Activated B cell treated with CpG ODN at 0.5 μM for 24 hours (primary cell): ENCODE measurements at regions of chr17 and their contacts with region 1.

Region 1: DNA sequence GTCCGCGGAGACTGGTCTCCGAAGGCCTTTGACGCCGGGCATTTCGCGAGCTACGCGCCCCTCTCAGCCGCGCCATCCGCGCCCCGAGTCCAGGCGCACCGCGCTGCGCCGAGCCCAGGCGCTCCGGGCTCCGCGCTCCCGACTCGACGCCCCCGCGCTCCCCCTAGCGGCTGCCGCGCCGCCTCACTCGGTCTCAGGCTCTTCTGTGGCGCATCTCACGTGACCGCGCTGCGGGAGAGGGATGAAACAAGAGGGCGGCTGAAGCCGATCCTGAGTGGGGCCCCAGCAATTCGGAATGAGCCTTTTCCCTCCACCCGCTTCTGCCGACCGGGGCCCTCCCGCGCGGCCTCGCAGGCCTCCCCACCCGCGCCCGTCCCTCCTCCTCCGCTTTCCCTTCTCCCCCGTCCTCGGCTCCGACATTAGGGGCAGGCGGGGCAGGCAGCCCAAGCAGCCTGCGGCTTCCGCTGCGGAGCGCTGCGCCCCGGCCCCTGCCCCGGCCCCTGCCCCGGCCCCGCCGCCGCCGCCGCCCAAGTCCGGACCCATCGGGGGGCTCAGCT is 42.5 kb upstream of the AMZ2 start:
- DNase-seq: peak; percentile 95
- ATAC-seq: peak; percentile 79
- H3K4me3 Mint-ChIP-seq: peak overlapping the region; percentile 89
- H3K27ac Mint-ChIP-seq: peak overlapping the region; percentile 94
- H3K4me1 Mint-ChIP-seq: peaks cover 41% of the 10 kb centered on the region
- H3K27me3 Mint-ChIP-seq: peaks cover 2% of the 10 kb centered on the region
- CTCF ChIP-seq: peak; percentile 28

Region 2: GRCh38 chr17:67818110-67819002 is 387.0 kb before region 1 on chr17:
- CTCF ChIA-PET with region 1: no interaction called
- POLR2A ChIA-PET with region 1: interaction called, 6 read pairs
- intact Hi-C with region 1: loop called (anchors 10 kb)
- DNase-seq: no peak
- ATAC-seq: peak; percentile 63
- H3K4me3 Mint-ChIP-seq: peak overlapping the region; percentile 76
- H3K27ac Mint-ChIP-seq: peak overlapping the region; percentile 90
- H3K4me1 Mint-ChIP-seq: peaks cover 81% of the 10 kb centered on the region
- H3K27me3 Mint-ChIP-seq: no peaks in the 10 kb centered on the region
- CTCF ChIP-seq: no peak

Region 3: DNA sequence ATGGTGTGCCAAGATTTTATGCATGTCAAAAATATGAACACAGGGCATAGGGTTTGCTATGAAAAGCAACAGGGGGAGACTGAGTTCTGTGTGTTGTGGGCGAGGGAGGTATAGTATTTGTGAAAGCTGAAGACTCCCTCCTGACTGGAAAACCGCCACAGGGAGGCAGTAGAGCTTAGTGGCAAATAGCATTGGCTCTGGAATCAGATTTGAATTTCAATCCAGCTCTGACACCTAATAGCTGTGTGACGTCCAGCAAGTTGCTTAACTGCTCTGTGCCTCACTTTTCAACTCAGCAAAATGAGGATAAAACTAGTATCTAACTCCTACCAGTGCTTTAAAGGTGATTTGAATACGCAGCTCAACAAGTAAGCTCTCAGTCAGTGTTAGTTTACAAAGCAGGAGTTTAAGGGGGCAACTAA is 147.8 kb before region 1 on chr17:
- CTCF ChIA-PET with region 1: no interaction called
- POLR2A ChIA-PET with region 1: interaction called, 3 read pairs
- intact Hi-C with region 1: loop called (anchors 1 kb)
- DNase-seq: no peak
- ATAC-seq: peak; percentile 71
- H3K4me3 Mint-ChIP-seq: no peak overlapping the region
- H3K27ac Mint-ChIP-seq: no peak overlapping the region
- H3K4me1 Mint-ChIP-seq: no peaks in the 10 kb centered on the region
- H3K27me3 Mint-ChIP-seq: no peaks in the 10 kb centered on the region
- CTCF ChIP-seq: no peak

Region 4: GRCh38 chr17:68133346-68134045 is 71.8 kb before region 1 on chr17:
- CTCF ChIA-PET with region 1: no interaction called
- POLR2A ChIA-PET with region 1: no interaction called
- intact Hi-C with region 1: no loop called
- DNase-seq: no peak
- ATAC-seq: no peak
- H3K4me3 Mint-ChIP-seq: no peak overlapping the region
- H3K27ac Mint-ChIP-seq: no peak overlapping the region
- H3K4me1 Mint-ChIP-seq: no peaks in the 10 kb centered on the region
- H3K27me3 Mint-ChIP-seq: no peaks in the 10 kb centered on the region
- CTCF ChIP-seq: no peak

Region 5: GRCh38 chr17:68184816-68185436 is 20.4 kb before region 1 on chr17:
- CTCF ChIA-PET with region 1: interaction called, 96 read pairs
- POLR2A ChIA-PET with region 1: interaction called, 192 read pairs
- intact Hi-C with region 1: no loop called
- DNase-seq: no peak
- ATAC-seq: peak; percentile 69
- H3K4me3 Mint-ChIP-seq: peak overlapping the region; percentile 62
- H3K27ac Mint-ChIP-seq: peak overlapping the region; percentile 91
- H3K4me1 Mint-ChIP-seq: peaks cover 66% of the 10 kb centered on the region
- H3K27me3 Mint-ChIP-seq: no peaks in the 10 kb centered on the region
- CTCF ChIP-seq: no peak

Region 6: GRCh38 chr17:68238164-68238872 is 33.0 kb after region 1 on chr17:
- CTCF ChIA-PET with region 1: interaction called, 16 read pairs
- POLR2A ChIA-PET with region 1: interaction called, 134 read pairs
- intact Hi-C with region 1: loop called (anchors 1 kb)
- DNase-seq: no peak
- ATAC-seq: no peak
- H3K4me3 Mint-ChIP-seq: peak overlapping the region; percentile 79
- H3K27ac Mint-ChIP-seq: peak overlapping the region; percentile 99
- H3K4me1 Mint-ChIP-seq: peaks cover 72% of the 10 kb centered on the region
- H3K27me3 Mint-ChIP-seq: no peaks in the 10 kb centered on the region
- CTCF ChIP-seq: no peak

Region 7: GRCh38 chr17:68255731-68256538 is 50.6 kb after region 1 on chr17:
- CTCF ChIA-PET with region 1: interaction called, 3 read pairs
- POLR2A ChIA-PET with region 1: interaction called, 25 read pairs
- intact Hi-C with region 1: loop called (anchors 1 kb)
- DNase-seq: no peak
- ATAC-seq: no peak
- H3K4me3 Mint-ChIP-seq: peak overlapping the region; percentile 16
- H3K27ac Mint-ChIP-seq: peak overlapping the region; percentile 89
- H3K4me1 Mint-ChIP-seq: peaks cover 83% of the 10 kb centered on the region
- H3K27me3 Mint-ChIP-seq: no peaks in the 10 kb centered on the region
- CTCF ChIP-seq: no peak

Region 8: DNA sequence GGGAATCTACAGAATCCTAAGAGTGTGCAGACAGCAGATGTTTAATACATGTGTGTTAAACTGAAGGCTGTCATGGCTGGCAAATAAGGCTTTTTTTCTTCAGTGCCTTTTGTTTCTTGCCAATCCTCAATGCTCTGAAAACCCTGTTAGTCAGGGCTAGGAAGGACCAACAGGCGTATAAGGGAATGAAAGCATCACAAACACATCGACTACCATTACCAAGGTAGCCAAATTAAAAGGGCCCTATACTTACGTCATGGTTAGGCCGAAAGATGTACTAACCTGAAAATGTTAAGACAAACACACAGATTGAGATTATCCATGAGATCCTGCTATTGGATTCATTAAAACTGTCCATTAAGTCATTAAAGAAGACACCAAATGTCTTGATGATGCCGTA is 72.5 kb after region 1 on chr17:
- CTCF ChIA-PET with region 1: no interaction called
- POLR2A ChIA-PET with region 1: no interaction called
- intact Hi-C with region 1: no loop called
- DNase-seq: no peak
- ATAC-seq: no peak
- H3K4me3 Mint-ChIP-seq: no peak overlapping the region
- H3K27ac Mint-ChIP-seq: no peak overlapping the region
- H3K4me1 Mint-ChIP-seq: no peaks in the 10 kb centered on the region
- H3K27me3 Mint-ChIP-seq: no peaks in the 10 kb centered on the region
- CTCF ChIP-seq: no peak

Region 9: GRCh38 chr17:68386240-68387087 is 181.1 kb after region 1 on chr17:
- CTCF ChIA-PET with region 1: no interaction called
- POLR2A ChIA-PET with region 1: no interaction called
- intact Hi-C with region 1: no loop called
- DNase-seq: no peak
- ATAC-seq: no peak
- H3K4me3 Mint-ChIP-seq: no peak overlapping the region
- H3K27ac Mint-ChIP-seq: no peak overlapping the region
- H3K4me1 Mint-ChIP-seq: no peaks in the 10 kb centered on the region
- H3K27me3 Mint-ChIP-seq: peaks cover 8% of the 10 kb centered on the region
- CTCF ChIP-seq: no peak